ENCODE measurements at regions of chr17 and their contacts with region 1.

Region 1: GRCh38 chr17:10618202-10618635 is 38.9 kb downstream of the MYH3 start:
- DNase-seq: peak; percentile 75
- H3K27ac ChIP-seq: peak overlapping the region; percentile 49
- CTCF ChIP-seq: peak; percentile 88

Region 2: DNA sequence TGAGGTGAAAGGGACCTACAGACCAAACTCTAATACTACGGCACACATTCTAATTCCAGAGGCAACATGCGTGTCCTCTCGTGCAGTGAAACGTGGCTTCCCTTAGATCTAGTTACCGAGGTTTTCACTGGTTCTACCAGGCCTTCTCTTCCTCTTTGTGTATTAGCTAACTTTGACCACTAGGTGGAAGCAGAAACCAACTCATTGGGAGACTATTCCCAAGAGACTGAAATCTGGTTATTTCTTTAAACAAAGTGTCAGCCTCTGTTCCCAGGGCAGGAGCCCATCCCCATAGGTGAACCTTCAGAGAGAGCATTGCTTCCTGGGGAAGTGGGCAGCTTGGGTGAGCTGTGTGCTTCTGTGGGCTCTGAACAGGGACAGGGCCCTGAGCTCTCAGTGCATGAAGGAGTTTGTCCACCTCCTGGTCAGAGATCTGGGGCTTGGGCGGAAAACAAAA is 693.5 kb before region 1 on chr17:
- CTCF ChIA-PET with region 1: interaction called, 15 read pairs
- POLR2A ChIA-PET with region 1: no interaction called
- DNase-seq: peak; percentile 71
- H3K27ac ChIP-seq: no peak overlapping the region
- CTCF ChIP-seq: peak; percentile 80

Region 3: DNA sequence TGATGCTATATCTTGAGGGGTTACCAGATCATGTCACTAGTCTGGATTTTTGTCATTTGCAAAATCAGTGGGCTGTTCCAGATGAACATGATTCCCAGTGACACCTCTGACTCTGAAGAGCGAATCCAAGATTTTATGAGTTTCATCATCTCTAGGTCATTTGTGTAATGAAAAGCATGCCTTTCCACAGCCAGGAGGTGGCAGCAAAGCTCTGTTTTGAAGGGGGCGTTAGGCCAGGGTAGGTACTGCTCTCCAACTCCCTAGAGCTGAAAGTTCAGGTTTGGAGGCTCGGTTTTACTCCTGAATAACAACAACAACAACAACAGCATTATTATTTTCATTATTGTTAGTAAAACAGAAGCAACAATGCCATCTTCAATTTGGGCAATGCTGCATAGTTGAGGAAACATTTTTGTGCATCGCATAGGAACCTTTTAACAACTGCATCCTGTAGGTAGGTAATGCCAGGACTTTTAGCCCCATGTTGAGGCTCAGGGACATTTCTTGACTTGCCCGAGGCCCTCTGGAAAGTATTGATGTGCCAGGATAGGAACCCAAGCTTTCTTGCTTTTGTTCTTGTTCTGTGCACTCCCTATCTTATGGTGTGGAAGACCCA is 322.4 kb before region 1 on chr17:
- CTCF ChIA-PET with region 1: interaction called, 16 read pairs
- POLR2A ChIA-PET with region 1: no interaction called
- DNase-seq: peak; percentile 67
- H3K27ac ChIP-seq: no peak overlapping the region
- CTCF ChIP-seq: peak; percentile 49

Region 4: DNA sequence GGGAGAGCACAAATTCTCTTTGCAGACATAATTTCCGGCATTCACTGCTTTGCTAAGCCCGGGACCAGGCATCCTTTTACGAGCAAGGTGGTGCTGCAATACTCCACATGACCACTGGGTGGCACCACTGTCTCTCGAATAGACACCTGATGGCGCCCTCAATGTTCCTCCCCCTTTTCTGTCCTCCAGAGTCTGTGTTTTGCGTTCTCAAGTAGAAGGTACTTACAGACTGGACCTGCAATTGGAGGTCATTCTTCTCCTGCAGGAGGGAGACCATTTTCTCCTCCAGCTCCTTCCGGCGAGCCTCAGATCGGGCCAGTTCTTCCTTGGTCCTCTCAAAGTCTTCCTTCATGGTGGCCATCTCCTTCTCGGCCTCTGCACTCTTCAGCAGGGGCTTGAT is 290.6 kb before region 1 on chr17:
- CTCF ChIA-PET with region 1: interaction called, 27 read pairs
- POLR2A ChIA-PET with region 1: no interaction called
- DNase-seq: peak; percentile 79
- H3K27ac ChIP-seq: no peak overlapping the region
- CTCF ChIP-seq: peak; percentile 86

Region 5: GRCh38 chr17:10646392-10646990 is 28.3 kb after region 1 on chr17:
- CTCF ChIA-PET with region 1: interaction called, 10 read pairs
- POLR2A ChIA-PET with region 1: no interaction called
- DNase-seq: peak; percentile 44
- H3K27ac ChIP-seq: no peak overlapping the region
- CTCF ChIP-seq: peak; percentile 84

Region 6: DNA sequence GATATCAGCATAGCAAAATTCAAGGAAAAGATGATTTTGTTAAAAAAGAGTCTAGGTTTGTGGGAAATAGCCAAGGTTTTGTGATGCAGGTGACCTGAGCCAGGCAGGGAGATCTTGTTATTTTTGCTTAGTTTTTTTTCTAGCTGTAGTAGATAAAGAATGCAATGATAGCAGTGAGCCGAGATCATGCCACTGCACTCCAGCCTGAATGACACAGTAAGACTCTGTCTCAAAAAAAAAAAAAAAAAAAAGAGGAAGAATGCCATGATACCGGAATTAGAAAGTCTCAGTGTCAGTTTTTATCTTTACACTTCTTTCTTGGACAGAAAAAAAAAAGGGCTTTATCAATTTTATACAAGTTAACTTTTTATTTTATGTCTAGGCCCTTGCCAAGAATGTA is 158.2 kb after region 1 on chr17:
- CTCF ChIA-PET with region 1: no interaction called
- POLR2A ChIA-PET with region 1: no interaction called
- DNase-seq: no peak
- H3K27ac ChIP-seq: no peak overlapping the region
- CTCF ChIP-seq: no peak